ENCODE measurements at regions of chr13 and their contacts with region 1.

Region 1: GRCh38 chr13:50911937-50912795 is 2.6 kb downstream of the RNASEH2B start:
- DNase-seq: peak; percentile 65
- H3K4me3 ChIP-seq: no peak overlapping the region
- H3K27ac ChIP-seq: no peak overlapping the region
- H3K4me1 ChIP-seq: peaks cover 22% of the 10 kb centered on the region
- H3K27me3 ChIP-seq: no peaks in the 10 kb centered on the region
- CTCF ChIP-seq: peak; percentile 86 to 93

Region 2: GRCh38 chr13:49976314-49977258 is 935.6 kb before region 1 on chr13:
- CTCF ChIA-PET with region 1: no interaction called
- dilution Hi-C with region 1: no loop called
- in situ Hi-C with region 1: loop called in 1 of 2 experiments (anchors 25 kb)
- intact Hi-C with region 1: loop called (anchors 2 kb)
- DNase-seq: peak; percentile 69
- H3K4me3 ChIP-seq: no peak overlapping the region
- H3K27ac ChIP-seq: peak overlapping the region; percentile 25
- H3K4me1 ChIP-seq: peaks cover 11% of the 10 kb centered on the region
- H3K27me3 ChIP-seq: no peaks in the 10 kb centered on the region
- CTCF ChIP-seq: peak; percentile 92 to 95

Region 3: GRCh38 chr13:49996951-49997895 is 914.9 kb before region 1 on chr13 and contains the start of gene TRIM13:
- CTCF ChIA-PET with region 1: interaction called, 3 read pairs
- dilution Hi-C with region 1: no loop called
- in situ Hi-C with region 1: loop called in 1 of 2 experiments (anchors 25 kb)
- intact Hi-C with region 1: no loop called
- DNase-seq: peak; percentile 79
- H3K4me3 ChIP-seq: peak within 1 kb of the TSS; percentile 69 to 85 (median 79)
- H3K27ac ChIP-seq: peak within 1 kb of the TSS; percentile 79
- H3K4me1 ChIP-seq: peaks cover 13% of the 10 kb centered on the region
- H3K27me3 ChIP-seq: no peaks in the 10 kb centered on the region
- CTCF ChIP-seq: peak; percentile 58 to 86
- total RNA-seq, gene TRIM13: 17.9 to 21.0 TPM

Region 4: DNA sequence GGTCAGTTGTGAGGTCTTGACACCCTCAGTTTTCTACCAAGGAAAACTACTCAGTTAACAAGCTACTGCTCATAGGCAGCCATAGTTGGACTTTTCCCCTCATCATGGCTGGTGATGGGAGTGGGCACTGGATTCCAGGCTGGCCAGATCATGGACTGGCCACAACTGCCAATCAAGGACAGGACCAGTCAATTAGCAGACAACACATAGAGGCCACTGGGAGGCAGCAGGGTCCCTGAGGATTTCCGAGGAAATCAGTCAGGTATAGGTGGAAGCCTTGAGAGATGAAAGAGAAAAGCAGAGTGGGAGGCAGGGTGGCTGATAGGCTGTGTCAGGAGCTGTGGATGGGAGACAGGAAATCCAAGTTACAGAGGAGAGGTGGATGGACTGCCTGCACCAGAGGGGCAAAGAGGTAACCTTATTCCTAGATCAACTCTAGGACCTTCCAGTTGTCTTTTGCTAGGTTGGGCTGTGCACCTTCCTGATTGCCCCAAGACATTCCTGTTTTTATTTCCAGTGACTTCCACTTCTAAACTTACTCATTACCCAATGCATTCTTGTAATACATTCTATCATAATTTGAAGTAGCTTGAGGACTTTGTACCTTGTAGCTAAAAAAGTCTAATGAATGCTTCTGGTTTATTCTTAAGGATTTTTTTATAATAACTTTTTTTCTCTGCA is 535.1 kb before region 1 on chr13:
- CTCF ChIA-PET with region 1: interaction called, 3 read pairs
- dilution Hi-C with region 1: no loop called
- in situ Hi-C with region 1: no loop called
- intact Hi-C with region 1: loop called (anchors 1 kb)
- DNase-seq: no peak
- H3K4me3 ChIP-seq: no peak overlapping the region
- H3K27ac ChIP-seq: no peak overlapping the region
- H3K4me1 ChIP-seq: no peaks in the 10 kb centered on the region
- H3K27me3 ChIP-seq: no peaks in the 10 kb centered on the region
- CTCF ChIP-seq: peak; percentile 15 to 49

Region 5: GRCh38 chr13:50685491-50685890 is 226.7 kb before region 1 on chr13:
- CTCF ChIA-PET with region 1: no interaction called
- dilution Hi-C with region 1: no loop called
- in situ Hi-C with region 1: no loop called
- intact Hi-C with region 1: loop called (anchors 10 kb)
- DNase-seq: peak; percentile 67
- H3K4me3 ChIP-seq: no peak overlapping the region
- H3K27ac ChIP-seq: no peak overlapping the region
- H3K4me1 ChIP-seq: peaks cover 7% of the 10 kb centered on the region
- H3K27me3 ChIP-seq: no peaks in the 10 kb centered on the region
- CTCF ChIP-seq: no peak

Region 6: GRCh38 chr13:51006067-51006845 is 94.1 kb after region 1 on chr13:
- CTCF ChIA-PET with region 1: no interaction called
- dilution Hi-C with region 1: no loop called
- in situ Hi-C with region 1: no loop called
- intact Hi-C with region 1: no loop called
- DNase-seq: no peak
- H3K4me3 ChIP-seq: no peak overlapping the region
- H3K27ac ChIP-seq: no peak overlapping the region
- H3K4me1 ChIP-seq: no peaks in the 10 kb centered on the region
- H3K27me3 ChIP-seq: no peaks in the 10 kb centered on the region
- CTCF ChIP-seq: no peak

Region 7: GRCh38 chr13:51070005-51070649 is 158.0 kb after region 1 on chr13:
- CTCF ChIA-PET with region 1: no interaction called
- dilution Hi-C with region 1: no loop called
- in situ Hi-C with region 1: no loop called
- intact Hi-C with region 1: loop called (anchors 1 kb)
- DNase-seq: peak; percentile 64
- H3K4me3 ChIP-seq: no peak overlapping the region
- H3K27ac ChIP-seq: no peak overlapping the region
- H3K4me1 ChIP-seq: peaks cover 19% of the 10 kb centered on the region
- H3K27me3 ChIP-seq: peaks cover 2% of the 10 kb centered on the region
- CTCF ChIP-seq: peak; percentile 97 to 98

Measured in mammary epithelial cell (primary cell).